Activated CD8-positive, alpha-beta memory T cell treated with anti-CD3 and anti-CD28 coated beads, Interleukin-2, amount 10 ng/mL, durations not matched to agents 7 days and 5 days (primary cell): ENCODE measurements at regions of chr12 and their contacts with region 1.

Region 1: GRCh38 chr12:64669270-64669842 is 59.1 kb downstream of the RASSF3 start:
- DNase-seq: peak; percentile 70
- ATAC-seq: peak; percentile 87
- H3K4me3 Mint-ChIP-seq: peak overlapping the region; percentile 88
- H3K27ac Mint-ChIP-seq: peak overlapping the region; percentile 100
- H3K4me1 Mint-ChIP-seq: peaks cover 87% of the 10 kb centered on the region
- H3K27me3 Mint-ChIP-seq: no peaks in the 10 kb centered on the region

Region 2: DNA sequence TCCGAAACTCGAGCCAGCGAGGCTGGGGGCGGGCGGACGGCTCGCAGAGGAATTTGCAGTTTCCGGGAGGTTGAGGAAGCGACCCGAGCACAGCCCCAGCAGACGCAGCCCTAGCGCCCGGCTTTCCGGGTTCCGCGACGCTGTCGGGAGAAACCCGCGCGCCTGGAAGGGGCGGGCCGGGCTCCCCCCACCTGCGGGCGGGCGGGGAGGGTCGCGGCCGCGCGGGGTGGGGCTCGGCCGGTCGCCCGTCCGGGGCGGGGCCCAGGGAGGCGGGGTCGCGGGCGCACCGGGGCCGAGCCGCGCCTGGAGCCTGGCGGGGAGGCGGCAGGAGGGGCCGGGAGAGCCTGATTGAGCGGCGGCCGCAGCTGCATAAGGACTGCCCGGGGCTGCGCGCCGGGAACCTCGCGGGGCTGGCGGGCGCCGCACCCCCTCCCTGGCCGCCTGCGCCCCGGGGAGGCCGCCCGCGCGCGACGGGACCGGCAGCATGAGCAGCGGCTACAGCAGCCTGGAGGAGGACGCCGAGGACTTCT is 59.1 kb before region 1 on chr12 and contains the start of gene RASSF3:
- CTCF ChIA-PET with region 1: interaction called, 20 read pairs
- DNase-seq: peak; percentile 88
- ATAC-seq: peak; percentile 71
- H3K4me3 Mint-ChIP-seq: peak within 1 kb of the TSS; percentile 84
- H3K27ac Mint-ChIP-seq: peak within 1 kb of the TSS; percentile 96
- H3K4me1 Mint-ChIP-seq: peaks cover 39% of the 10 kb centered on the region
- H3K27me3 Mint-ChIP-seq: no peaks in the 10 kb centered on the region
- total RNA-seq, gene RASSF3: 45.5 to 61.5 TPM

Region 3: DNA sequence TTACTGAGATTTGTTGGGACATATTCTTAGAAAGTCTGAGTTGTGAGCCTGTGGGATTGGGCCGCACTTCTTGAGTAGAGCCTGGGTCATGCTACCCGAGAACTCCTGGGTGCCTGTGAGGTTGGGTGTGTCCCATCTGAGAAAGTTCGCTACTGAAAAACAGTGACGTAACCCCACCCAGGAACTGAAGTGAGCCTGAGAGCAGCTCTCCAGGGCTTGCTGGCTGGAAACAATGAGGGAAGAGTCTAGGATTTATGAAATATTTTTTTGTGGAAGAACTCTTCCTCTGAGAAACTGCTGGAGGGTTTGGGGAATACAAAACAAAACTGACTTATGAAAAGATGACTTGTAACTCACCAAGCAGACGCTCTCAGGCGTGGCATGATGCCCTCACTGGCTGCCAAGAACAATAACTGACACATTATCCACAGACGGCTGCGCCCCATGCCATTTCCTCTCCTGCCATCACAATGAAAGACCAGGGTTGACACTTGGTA is 10.2 kb after region 1 on chr12:
- CTCF ChIA-PET with region 1: interaction called, 53 read pairs
- DNase-seq: peak; percentile 78
- ATAC-seq: peak; percentile 68
- H3K4me3 Mint-ChIP-seq: peak overlapping the region; percentile 66
- H3K27ac Mint-ChIP-seq: peak overlapping the region; percentile 97
- H3K4me1 Mint-ChIP-seq: peaks cover 93% of the 10 kb centered on the region
- H3K27me3 Mint-ChIP-seq: no peaks in the 10 kb centered on the region